ENCODE measurements at regions of chr7 and their contacts with region 1.

Region 1: GRCh38 chr7:106166655-106167342 is 54.7 kb upstream of the SYPL1 start:
- DNase-seq: peak; percentile 79
- H3K4me3 ChIP-seq: no peak overlapping the region
- H3K27ac ChIP-seq: no peak overlapping the region
- H3K4me1 ChIP-seq: peaks cover 14% of the 10 kb centered on the region
- CTCF ChIP-seq: peak; percentile 95

Region 2: GRCh38 chr7:105652359-105652993 is 514.3 kb before region 1 on chr7:
- CTCF ChIA-PET with region 1: no interaction called
- POLR2A ChIA-PET with region 1: no interaction called
- intact Hi-C with region 1: loop called (anchors 2 kb)
- DNase-seq: peak; percentile 71
- H3K4me3 ChIP-seq: no peak overlapping the region
- H3K27ac ChIP-seq: no peak overlapping the region
- H3K4me1 ChIP-seq: no peaks in the 10 kb centered on the region
- CTCF ChIP-seq: peak; percentile 84

Region 3: DNA sequence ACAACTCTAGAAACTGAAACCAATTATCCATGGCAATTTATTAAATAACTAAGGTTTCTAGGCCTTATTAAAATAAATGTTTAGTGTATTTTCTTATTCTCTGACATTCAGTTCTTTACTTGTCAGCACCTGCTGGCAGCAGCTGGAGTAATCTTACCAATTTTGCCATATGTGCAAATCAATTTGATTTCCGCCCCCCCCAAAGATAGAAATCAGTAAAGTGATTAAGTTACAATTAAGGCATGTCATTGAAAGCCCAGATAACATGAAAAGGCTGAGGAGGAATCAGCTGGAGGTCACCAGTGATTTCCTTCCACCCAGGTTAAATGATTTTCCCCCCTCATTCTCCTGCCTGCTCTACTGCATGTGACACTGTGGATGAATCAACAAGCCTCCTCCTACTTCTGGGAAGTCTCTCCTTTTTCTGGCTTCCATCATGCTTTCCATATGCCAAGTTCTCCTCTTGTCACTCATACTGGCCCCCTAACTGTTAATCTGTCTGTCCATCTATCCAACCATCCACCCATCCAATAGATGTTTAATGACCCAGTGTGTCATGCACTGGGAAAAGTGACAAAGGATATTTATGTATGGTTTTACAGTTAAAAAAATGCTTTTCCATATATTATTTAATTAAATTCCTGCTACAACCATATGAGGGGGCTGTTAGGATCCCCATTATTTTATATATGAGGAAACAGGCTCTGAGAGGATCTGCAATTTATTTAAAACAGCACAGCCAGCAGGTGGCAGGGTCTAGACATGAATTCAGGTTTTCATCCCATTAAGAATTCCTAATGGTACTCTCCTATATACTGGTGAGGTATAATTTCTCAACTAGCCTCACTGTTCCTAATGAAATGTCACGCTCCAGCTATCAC is 406.9 kb before region 1 on chr7:
- CTCF ChIA-PET with region 1: interaction called, 3 read pairs
- POLR2A ChIA-PET with region 1: interaction called, 3 read pairs
- intact Hi-C with region 1: loop called (anchors 1 kb)
- DNase-seq: peak; percentile 33
- H3K4me3 ChIP-seq: no peak overlapping the region
- H3K27ac ChIP-seq: no peak overlapping the region
- H3K4me1 ChIP-seq: no peaks in the 10 kb centered on the region
- CTCF ChIP-seq: peak; percentile 85

Region 4: GRCh38 chr7:105934572-105935185 is 232.1 kb before region 1 on chr7:
- CTCF ChIA-PET with region 1: interaction called, 3 read pairs
- POLR2A ChIA-PET with region 1: no interaction called
- intact Hi-C with region 1: loop called (anchors 2 kb)
- DNase-seq: peak; percentile 55
- H3K4me3 ChIP-seq: no peak overlapping the region
- H3K27ac ChIP-seq: no peak overlapping the region
- H3K4me1 ChIP-seq: no peaks in the 10 kb centered on the region
- CTCF ChIP-seq: peak; percentile 72

Region 5: DNA sequence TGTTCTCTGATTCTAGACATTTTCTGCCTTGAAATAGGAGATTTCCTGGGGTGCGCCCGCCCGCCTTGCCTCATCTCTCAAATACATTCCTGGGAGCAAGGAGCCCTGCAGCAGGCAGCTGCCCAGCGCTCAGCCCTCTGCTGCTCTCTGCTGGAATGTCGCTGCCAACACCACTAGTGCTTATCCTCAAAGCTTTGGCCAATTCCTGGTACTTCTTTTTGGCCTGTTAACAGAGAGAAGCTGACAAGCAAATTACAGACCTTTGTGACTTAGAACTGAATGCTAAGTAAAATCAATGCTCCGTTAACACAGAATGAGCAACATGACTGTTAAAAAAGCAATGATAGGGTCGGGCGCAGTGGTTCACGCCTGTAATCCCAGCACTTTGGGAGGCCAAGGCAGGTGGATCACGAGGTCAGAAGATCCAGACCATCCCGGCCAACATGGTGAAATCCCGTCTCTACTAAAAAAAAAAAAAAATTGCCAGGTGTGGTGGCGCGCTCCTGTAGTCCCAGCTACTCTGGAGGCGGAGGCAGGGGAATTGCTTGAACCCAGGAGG is 12.8 kb before region 1 on chr7:
- CTCF ChIA-PET with region 1: interaction called, 4 read pairs
- POLR2A ChIA-PET with region 1: interaction called, 20 read pairs
- intact Hi-C with region 1: no loop called
- DNase-seq: peak; percentile 89
- H3K4me3 ChIP-seq: no peak overlapping the region
- H3K27ac ChIP-seq: peak overlapping the region; percentile 15
- H3K4me1 ChIP-seq: peaks cover 59% of the 10 kb centered on the region
- CTCF ChIP-seq: peak; percentile 99

Region 6: DNA sequence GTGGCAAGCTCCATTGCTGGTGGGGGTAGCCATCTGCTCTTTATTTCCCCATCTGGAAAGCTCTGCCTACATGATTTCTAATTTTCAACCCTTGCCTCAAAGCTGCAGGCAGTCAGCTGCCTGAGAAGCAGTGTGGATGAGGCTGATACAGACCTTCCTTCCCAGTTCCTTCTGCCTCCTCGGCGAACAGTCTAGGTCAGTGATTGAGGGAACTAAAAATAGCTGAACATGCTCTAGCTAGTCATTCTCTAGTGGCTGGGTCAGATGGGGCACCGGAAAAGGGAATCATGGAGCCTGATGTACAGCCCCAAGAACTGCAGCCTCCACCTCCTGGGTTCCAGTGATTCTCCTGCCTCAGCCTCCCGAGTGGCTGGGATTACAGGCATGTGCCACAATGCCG is 69.3 kb after region 1 on chr7:
- CTCF ChIA-PET with region 1: no interaction called
- POLR2A ChIA-PET with region 1: no interaction called
- intact Hi-C with region 1: no loop called
- DNase-seq: no peak
- H3K4me3 ChIP-seq: no peak overlapping the region
- H3K27ac ChIP-seq: no peak overlapping the region
- H3K4me1 ChIP-seq: no peaks in the 10 kb centered on the region
- CTCF ChIP-seq: no peak

Measured in OCI-LY7 (cell line).